ENCODE measurements at regions of chr11 and their contacts with region 1.

Region 1: DNA sequence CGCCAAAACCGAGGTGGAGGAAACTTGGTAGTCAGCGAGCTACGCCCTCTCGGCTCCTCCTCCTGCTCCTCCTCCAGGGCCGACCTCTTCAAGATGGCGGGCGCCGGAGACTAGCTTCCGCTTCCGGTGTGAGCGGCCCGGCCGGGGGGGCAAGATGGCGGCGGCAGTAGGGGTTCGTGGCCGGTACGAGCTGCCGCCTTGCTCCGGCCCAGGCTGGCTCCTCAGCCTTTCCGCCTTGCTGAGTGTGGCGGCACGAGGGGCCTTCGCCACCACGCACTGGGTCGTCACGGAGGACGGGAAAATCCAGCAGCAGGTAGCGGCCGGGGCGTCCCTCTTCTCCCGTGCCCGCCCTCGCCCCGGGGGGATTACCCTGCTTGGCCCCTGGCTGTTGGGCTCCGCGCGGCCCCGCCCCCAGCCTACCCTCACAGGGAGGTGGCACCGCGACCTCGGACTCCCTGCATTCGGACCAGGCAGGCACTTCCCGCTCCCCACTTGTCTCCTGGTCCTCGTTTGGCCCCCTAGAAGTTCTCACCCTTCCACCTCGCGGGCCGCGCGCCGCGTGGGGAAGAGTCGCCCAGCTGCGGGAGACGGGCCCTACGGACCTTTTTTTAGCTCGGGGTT is at the start of gene TTC17:
- DNase-seq: peak; percentile 91 to 97 (median 92)
- ATAC-seq: peak; percentile 97
- H3K4me3 ChIP-seq: peak within 1 kb of the TSS; percentile 97
- H3K27ac ChIP-seq: peak within 1 kb of the TSS; percentile 90
- H3K4me1 ChIP-seq: peaks cover 0 to 13% of the 10 kb centered on the region in 2 experiments; a peak in 2 of 5 replicates
- H3K27me3 ChIP-seq: no peaks in the 10 kb centered on the region
- CTCF ChIP-seq: no peak
- EP300 ChIP-seq: peak; percentile 29; the same call in 1 of the 2 replicates
- POLR2A ChIP-seq: peak; percentile 97
- RAD21 ChIP-seq: no peak
- polyA plus RNA-seq, gene TTC17: 19.7 to 29.5 TPM

Region 2: GRCh38 chr11:43197379-43197778 is 161.5 kb before region 1 on chr11:
- CTCF ChIA-PET with region 1: no interaction called
- POLR2A ChIA-PET with region 1: no interaction called
- in situ Hi-C with region 1: no loop called
- intact Hi-C with region 1: no loop called
- DNase-seq: no peak
- ATAC-seq: no peak
- H3K4me3 ChIP-seq: no peak overlapping the region
- H3K27ac ChIP-seq: no peak overlapping the region
- H3K4me1 ChIP-seq: no peaks in the 10 kb centered on the region
- H3K27me3 ChIP-seq: no peaks in the 10 kb centered on the region
- CTCF ChIP-seq: no peak
- EP300 ChIP-seq: no peak
- POLR2A ChIP-seq: no peak
- RAD21 ChIP-seq: no peak

Region 3: DNA sequence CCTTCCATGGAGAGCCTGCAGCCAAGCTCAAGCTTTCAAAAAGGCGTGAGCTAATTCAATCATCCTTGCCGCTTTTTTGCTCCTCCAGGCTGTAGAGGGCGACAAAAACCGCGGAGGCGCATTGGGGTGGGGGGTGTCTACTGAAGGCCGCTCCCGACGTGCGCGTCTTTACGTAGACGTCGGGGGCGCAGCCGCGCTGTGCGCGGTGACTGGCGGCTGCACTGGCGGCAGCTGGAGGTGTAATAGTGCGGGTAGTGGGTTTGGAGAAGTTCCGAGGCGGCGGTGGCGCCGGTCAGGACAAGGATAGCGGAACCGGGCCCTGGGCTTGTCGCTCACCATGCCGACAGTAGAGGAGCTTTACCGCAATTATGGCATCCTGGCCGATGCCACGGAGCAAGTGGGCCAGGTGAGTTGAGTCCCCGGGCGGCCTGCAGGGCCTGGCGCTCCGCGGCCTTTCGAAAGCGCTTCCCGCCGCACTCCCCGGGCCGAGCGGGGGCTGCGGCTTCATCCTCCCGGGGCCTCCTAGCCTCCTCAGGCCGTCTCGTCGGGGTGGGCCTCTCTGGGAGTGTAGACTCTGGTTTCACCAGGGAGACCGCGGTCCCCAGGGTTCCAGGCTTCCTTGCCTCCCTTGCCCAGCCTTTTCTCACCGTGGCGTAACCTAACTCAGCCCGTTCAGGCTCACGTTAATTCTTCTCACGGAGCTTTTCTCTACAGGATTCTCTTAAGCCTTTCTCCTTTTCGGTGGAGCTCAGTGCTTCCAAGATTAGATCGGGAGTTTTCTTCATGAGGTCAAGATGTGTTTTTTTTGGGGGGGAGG is 46.9 kb before region 1 on chr11 and contains the start of gene API5:
- CTCF ChIA-PET with region 1: no interaction called
- POLR2A ChIA-PET with region 1: interaction called, 18 read pairs
- in situ Hi-C with region 1: no loop called
- intact Hi-C with region 1: loop called (anchors 1 kb)
- DNase-seq: peak; percentile 79 to 97 (median 84)
- ATAC-seq: peak; percentile 97
- H3K4me3 ChIP-seq: peak within 1 kb of the TSS; percentile 60
- H3K27ac ChIP-seq: peak within 1 kb of the TSS; percentile 74
- H3K4me1 ChIP-seq: peaks cover 4 to 6% of the 10 kb centered on the region in 2 experiments; a peak in 4 of 5 replicates
- H3K27me3 ChIP-seq: no peaks in the 10 kb centered on the region
- CTCF ChIP-seq: peak; percentile 85 to 94 (median 85)
- EP300 ChIP-seq: peak; percentile 43; the same call in 1 of the 2 replicates
- POLR2A ChIP-seq: peak; percentile 92
- RAD21 ChIP-seq: peak; percentile 39 to 49
- polyA plus RNA-seq, gene API5: 59.8 to 111 TPM

Measured in K562 (cell line).